ENCODE measurements at regions of chr13 and their contacts with region 1.

Region 1: GRCh38 chr13:41222259-41222852 is 28.0 kb upstream of the KBTBD7 start:
- DNase-seq: peak; percentile 78
- ATAC-seq: peak; percentile 99
- H3K4me3 ChIP-seq: no peak overlapping the region
- H3K4me3 Mint-ChIP-seq: no peak overlapping the region
- H3K27ac ChIP-seq: no peak overlapping the region
- H3K27ac Mint-ChIP-seq: no peak overlapping the region
- H3K4me1 ChIP-seq: peaks cover 0 to 6% of the 10 kb centered on the region in 2 donors
- H3K4me1 Mint-ChIP-seq: peaks cover 3% of the 10 kb centered on the region
- H3K27me3 ChIP-seq: no peaks in the 10 kb centered on the region
- H3K27me3 Mint-ChIP-seq: no peaks in the 10 kb centered on the region
- CTCF ChIP-seq: peak; percentile 85

Region 2: DNA sequence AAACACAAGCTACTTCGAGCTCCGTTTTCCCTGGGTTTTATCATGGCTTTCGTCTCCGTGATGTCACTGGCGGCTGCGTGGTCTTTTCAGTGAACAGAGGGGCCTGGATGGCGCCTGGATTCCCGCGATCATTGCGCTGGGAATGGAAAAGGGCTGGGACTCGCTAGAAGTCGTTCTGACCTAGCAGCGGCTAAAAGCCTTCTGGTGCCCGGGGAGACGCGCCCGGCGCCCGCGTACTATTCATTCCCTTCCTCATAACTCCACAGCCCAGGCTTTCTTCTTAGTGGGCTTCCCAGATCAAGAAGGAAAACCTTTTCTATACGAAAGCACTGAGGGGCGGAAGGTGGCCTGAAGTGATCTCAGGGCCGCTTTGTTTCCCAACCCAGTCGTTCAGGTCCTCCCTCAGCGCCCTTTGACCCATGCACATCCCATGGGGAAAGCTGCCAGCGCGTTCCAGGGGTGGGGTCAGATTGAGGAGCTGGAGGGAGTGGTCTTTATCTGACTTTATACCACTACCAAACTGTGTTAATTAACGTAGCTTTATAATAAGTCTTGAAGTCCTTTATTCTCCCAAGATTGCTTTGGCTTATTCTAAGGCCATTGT is 299.8 kb before region 1 on chr13:
- CTCF ChIA-PET with region 1: no interaction called
- POLR2A ChIA-PET with region 1: no interaction called
- intact Hi-C with region 1: no loop called
- DNase-seq: no peak
- ATAC-seq: no peak
- H3K4me3 ChIP-seq: no peak overlapping the region
- H3K4me3 Mint-ChIP-seq: peak overlapping the region; percentile 94
- H3K27ac ChIP-seq: no peak overlapping the region
- H3K27ac Mint-ChIP-seq: peak overlapping the region; percentile 67
- H3K4me1 ChIP-seq: peaks cover 9 to 16% of the 10 kb centered on the region in 2 donors
- H3K4me1 Mint-ChIP-seq: peaks cover 21% of the 10 kb centered on the region
- H3K27me3 ChIP-seq: no peaks in the 10 kb centered on the region
- H3K27me3 Mint-ChIP-seq: no peaks in the 10 kb centered on the region
- CTCF ChIP-seq: no peak

Region 3: DNA sequence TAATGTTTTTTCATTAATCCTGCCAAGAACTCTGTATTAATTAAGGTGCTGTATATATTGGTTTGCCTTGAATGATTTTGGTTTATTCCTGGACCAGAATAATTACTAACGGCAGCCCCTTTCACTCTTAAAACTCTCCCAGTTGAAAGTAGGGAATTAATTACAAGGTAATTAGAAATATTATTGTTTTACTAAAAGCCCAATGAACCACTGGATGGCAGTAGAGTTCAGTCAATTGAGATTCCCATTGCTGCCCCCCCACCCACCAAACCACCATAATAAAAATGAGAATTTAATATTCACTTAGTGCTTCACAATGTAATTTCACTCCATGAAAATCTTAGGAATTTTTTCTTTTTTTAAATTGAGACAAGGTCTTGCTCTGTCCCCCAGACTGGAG is 147.3 kb before region 1 on chr13:
- CTCF ChIA-PET with region 1: interaction called, 71 read pairs
- POLR2A ChIA-PET with region 1: no interaction called
- intact Hi-C with region 1: loop called (anchors 1 kb)
- DNase-seq: peak; percentile 71
- ATAC-seq: peak; percentile 43
- H3K4me3 ChIP-seq: no peak overlapping the region
- H3K4me3 Mint-ChIP-seq: no peak overlapping the region
- H3K27ac ChIP-seq: no peak overlapping the region
- H3K27ac Mint-ChIP-seq: no peak overlapping the region
- H3K4me1 ChIP-seq: no peaks in the 10 kb centered on the region
- H3K4me1 Mint-ChIP-seq: peaks cover 5% of the 10 kb centered on the region
- H3K27me3 ChIP-seq: no peaks in the 10 kb centered on the region
- H3K27me3 Mint-ChIP-seq: no peaks in the 10 kb centered on the region
- CTCF ChIP-seq: peak; percentile 79

Region 4: DNA sequence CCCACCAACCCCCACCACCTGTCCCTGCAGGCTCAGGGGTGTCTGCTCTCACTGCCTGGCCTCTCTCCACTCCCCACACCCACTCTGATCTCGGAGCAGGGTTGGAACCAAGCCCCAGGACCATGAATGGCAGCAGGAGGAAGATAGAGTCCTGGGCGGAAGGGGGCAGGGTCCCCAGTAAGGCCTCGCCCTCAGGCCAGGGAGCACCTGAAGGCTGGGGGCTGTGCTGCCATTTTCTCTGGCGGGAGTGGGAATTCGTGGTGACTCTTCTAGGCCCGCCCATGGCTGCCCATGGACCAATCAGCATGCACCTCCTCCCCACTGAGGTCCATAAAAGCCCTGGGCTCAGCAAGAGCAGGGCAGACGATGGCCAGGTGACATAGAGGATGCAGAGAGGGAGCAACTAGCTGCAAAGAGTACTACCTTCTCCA is 114.8 kb before region 1 on chr13:
- CTCF ChIA-PET with region 1: no interaction called
- POLR2A ChIA-PET with region 1: no interaction called
- intact Hi-C with region 1: no loop called
- DNase-seq: no peak
- ATAC-seq: no peak
- H3K4me3 ChIP-seq: no peak overlapping the region
- H3K4me3 Mint-ChIP-seq: no peak overlapping the region
- H3K27ac ChIP-seq: no peak overlapping the region
- H3K27ac Mint-ChIP-seq: no peak overlapping the region
- H3K4me1 ChIP-seq: no peaks in the 10 kb centered on the region
- H3K4me1 Mint-ChIP-seq: no peaks in the 10 kb centered on the region
- H3K27me3 ChIP-seq: no peaks in the 10 kb centered on the region
- H3K27me3 Mint-ChIP-seq: no peaks in the 10 kb centered on the region
- CTCF ChIP-seq: no peak

Region 5: DNA sequence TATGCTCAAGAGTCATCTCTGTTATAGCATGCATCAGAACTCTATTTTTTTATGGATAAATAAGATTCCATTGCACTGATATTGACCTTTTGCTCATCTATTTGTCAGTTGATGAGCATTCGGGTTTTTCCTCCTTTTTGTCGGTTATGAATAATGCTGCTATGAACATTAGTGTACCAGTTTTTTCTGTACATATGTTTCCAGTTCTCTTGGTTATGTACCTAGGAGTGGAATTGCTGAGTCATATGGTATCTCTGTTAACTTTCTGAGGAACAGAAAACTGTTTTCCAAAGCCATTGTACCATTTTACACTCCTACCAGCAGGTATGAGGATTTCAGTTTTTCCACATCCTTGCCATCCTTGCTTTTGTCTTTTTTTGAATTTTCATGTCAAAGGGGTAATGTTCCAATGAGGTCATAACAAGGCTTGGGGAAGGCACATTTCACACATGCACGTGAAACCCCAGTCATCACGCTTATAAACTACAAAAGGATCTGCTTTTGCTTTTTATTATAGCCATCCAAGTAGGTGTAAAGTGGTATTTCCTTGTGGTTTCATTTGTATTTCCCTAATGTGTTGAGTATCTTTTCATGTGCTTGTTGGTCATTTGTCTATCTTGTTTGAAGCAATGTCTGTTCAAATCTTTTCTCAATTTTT is 42.6 kb before region 1 on chr13:
- CTCF ChIA-PET with region 1: no interaction called
- POLR2A ChIA-PET with region 1: no interaction called
- intact Hi-C with region 1: loop called (anchors 5 kb)
- DNase-seq: no peak
- ATAC-seq: no peak
- H3K4me3 ChIP-seq: no peak overlapping the region
- H3K4me3 Mint-ChIP-seq: no peak overlapping the region
- H3K27ac ChIP-seq: no peak overlapping the region
- H3K27ac Mint-ChIP-seq: no peak overlapping the region
- H3K4me1 ChIP-seq: no peaks in the 10 kb centered on the region
- H3K4me1 Mint-ChIP-seq: no peaks in the 10 kb centered on the region
- H3K27me3 ChIP-seq: no peaks in the 10 kb centered on the region
- H3K27me3 Mint-ChIP-seq: no peaks in the 10 kb centered on the region
- CTCF ChIP-seq: no peak

Region 6: GRCh38 chr13:41193919-41194824 is 28.2 kb before region 1 on chr13 and contains the start of gene KBTBD7:
- CTCF ChIA-PET with region 1: interaction called, 15 read pairs
- POLR2A ChIA-PET with region 1: no interaction called
- intact Hi-C with region 1: loop called (anchors 1 kb)
- DNase-seq: peak; percentile 90
- ATAC-seq: peak; percentile 94
- H3K4me3 ChIP-seq: peak within 1 kb of the TSS; percentile 59 to 92 (median 88)
- H3K4me3 Mint-ChIP-seq: peak within 1 kb of the TSS; percentile 96
- H3K27ac ChIP-seq: peak within 1 kb of the TSS; percentile 32 to 63
- H3K27ac Mint-ChIP-seq: peak within 1 kb of the TSS; percentile 94
- H3K4me1 ChIP-seq: peaks cover 33 to 34% of the 10 kb centered on the region in 2 donors
- H3K4me1 Mint-ChIP-seq: peaks cover 45% of the 10 kb centered on the region
- H3K27me3 ChIP-seq: no peaks in the 10 kb centered on the region
- H3K27me3 Mint-ChIP-seq: no peaks in the 10 kb centered on the region
- CTCF ChIP-seq: no peak
- total RNA-seq, gene KBTBD7: 8.4 and 9.2 TPM in 2 replicates

Region 7: DNA sequence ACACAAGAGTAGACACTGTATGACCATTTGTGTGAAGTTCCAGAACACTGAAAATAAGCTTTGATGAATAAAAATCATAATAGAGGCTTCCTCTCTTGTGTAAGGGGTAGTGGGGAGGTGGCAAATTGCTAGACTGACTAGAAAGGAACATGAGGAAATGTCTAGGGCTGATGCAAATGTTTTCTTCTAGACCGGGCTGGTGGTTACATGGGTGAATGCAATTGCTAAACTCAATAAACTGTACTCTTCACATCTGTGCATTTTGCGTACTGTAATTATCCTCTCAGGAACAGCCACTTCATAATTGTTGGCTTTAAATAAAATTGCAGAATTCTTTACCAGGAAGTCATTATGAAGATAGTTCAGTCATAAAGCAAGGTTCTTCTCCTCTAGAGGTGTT is 22.8 kb before region 1 on chr13:
- CTCF ChIA-PET with region 1: interaction called, 15 read pairs
- POLR2A ChIA-PET with region 1: no interaction called
- intact Hi-C with region 1: loop called (anchors 1 kb)
- DNase-seq: peak; percentile 88
- ATAC-seq: peak; percentile 89
- H3K4me3 ChIP-seq: peak overlapping the region in 2 of 5 experiments; percentile 5 to 47
- H3K4me3 Mint-ChIP-seq: peak overlapping the region; percentile 51
- H3K27ac ChIP-seq: peak overlapping the region; percentile 71 to 100
- H3K27ac Mint-ChIP-seq: peak overlapping the region; percentile 98
- H3K4me1 ChIP-seq: peaks cover 35% of the 10 kb centered on the region in 2 donors
- H3K4me1 Mint-ChIP-seq: peaks cover 42% of the 10 kb centered on the region
- H3K27me3 ChIP-seq: no peaks in the 10 kb centered on the region
- H3K27me3 Mint-ChIP-seq: no peaks in the 10 kb centered on the region
- CTCF ChIP-seq: no peak